Activated CD4-positive, alpha-beta T cell treated with anti-CD3 and anti-CD28 coated beads for 36 hours (primary cell): ENCODE measurements at regions of chr9 and their contacts with region 1.

Region 1: DNA sequence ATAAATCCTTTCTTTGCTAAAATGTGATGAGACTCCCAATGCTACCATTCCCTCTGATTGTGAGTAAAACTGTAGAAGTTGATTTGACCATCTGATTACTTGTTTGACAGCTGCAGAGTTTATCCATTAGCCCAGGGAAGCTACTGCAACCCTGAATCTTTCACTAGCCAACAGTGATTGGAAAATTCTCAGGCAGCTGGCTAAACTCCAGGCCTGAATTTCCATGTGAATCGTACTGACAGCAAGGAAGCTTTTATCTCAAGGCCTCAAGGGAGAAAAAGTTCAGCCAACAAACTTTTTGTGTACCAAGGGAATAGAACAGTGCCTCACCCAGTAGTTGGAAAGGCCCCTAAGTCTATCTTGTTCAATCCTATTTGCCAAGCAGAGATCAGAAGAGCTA is 246.7 kb upstream of the TRPM3 start:
- DNase-seq: no peak
- ATAC-seq: no peak
- H3K4me3 Mint-ChIP-seq: no peak overlapping the region
- H3K27ac Mint-ChIP-seq: no peak overlapping the region
- H3K4me1 Mint-ChIP-seq: no peaks in the 10 kb centered on the region
- H3K27me3 Mint-ChIP-seq: peaks cover 9% of the 10 kb centered on the region

Region 2: DNA sequence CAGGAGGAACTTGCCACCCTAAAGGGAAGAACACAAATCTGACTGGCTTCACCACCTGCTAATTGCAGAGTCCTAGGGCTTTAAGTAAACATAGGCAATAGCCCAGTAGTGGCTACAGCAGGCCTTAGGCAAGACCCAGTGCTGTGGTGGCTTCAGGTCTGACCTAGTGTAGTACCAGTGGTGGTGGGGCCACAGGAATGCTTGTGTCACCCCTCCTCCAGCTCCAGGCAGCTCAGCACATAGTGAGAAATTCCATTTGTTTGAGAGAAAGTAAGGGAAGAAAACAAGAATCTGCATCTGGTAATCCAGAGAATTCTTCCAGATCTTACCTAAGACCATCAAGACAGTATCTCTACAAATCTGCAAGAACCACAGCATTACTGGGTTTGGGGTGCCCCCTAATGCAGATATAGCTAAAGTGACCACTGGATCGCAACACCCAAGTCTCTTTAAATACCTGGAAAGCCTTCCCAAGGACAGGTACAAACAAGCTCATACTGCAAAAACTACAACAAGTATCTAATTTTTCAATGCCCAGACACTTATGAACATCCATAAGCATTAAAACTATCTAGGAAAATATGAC is 144.1 kb before region 1 on chr9:
- CTCF ChIA-PET with region 1: no interaction called
- POLR2A ChIA-PET with region 1: no interaction called
- intact Hi-C with region 1: no loop called
- DNase-seq: no peak
- ATAC-seq: no peak
- H3K4me3 Mint-ChIP-seq: no peak overlapping the region
- H3K27ac Mint-ChIP-seq: no peak overlapping the region
- H3K4me1 Mint-ChIP-seq: no peaks in the 10 kb centered on the region
- H3K27me3 Mint-ChIP-seq: peaks cover 2% of the 10 kb centered on the region

Region 3: DNA sequence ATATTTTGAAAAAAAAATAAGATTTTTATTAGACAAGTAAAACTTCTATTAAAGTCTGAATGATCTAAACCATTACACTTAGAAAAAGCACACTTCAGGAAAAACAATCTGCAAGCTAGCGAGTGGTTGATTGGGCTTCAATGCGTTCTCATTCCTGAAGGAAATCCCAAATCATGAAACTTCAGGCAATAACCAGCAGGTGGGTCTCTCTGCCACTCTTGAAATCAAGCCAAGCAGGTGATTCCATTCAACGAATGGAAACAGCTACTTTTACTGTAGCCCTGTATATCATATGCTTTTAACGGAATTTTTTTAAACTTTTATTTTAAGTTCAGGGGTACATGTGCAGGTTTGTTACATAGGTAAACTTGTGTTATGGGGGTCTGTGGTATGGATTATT is 12.3 kb before region 1 on chr9:
- CTCF ChIA-PET with region 1: no interaction called
- POLR2A ChIA-PET with region 1: no interaction called
- intact Hi-C with region 1: loop called in 1 of 2 experiments (anchors 1 kb)
- DNase-seq: no peak
- ATAC-seq: no peak
- H3K4me3 Mint-ChIP-seq: no peak overlapping the region
- H3K27ac Mint-ChIP-seq: no peak overlapping the region
- H3K4me1 Mint-ChIP-seq: no peaks in the 10 kb centered on the region
- H3K27me3 Mint-ChIP-seq: no peaks in the 10 kb centered on the region

Region 4: GRCh38 chr9:71431931-71432330 is 63.8 kb after region 1 on chr9:
- CTCF ChIA-PET with region 1: no interaction called
- POLR2A ChIA-PET with region 1: no interaction called
- intact Hi-C with region 1: loop called in 1 of 2 experiments (anchors 10 kb)
- DNase-seq: no peak
- ATAC-seq: no peak
- H3K4me3 Mint-ChIP-seq: no peak overlapping the region
- H3K27ac Mint-ChIP-seq: no peak overlapping the region
- H3K4me1 Mint-ChIP-seq: no peaks in the 10 kb centered on the region
- H3K27me3 Mint-ChIP-seq: peaks cover 9% of the 10 kb centered on the region

Region 5: DNA sequence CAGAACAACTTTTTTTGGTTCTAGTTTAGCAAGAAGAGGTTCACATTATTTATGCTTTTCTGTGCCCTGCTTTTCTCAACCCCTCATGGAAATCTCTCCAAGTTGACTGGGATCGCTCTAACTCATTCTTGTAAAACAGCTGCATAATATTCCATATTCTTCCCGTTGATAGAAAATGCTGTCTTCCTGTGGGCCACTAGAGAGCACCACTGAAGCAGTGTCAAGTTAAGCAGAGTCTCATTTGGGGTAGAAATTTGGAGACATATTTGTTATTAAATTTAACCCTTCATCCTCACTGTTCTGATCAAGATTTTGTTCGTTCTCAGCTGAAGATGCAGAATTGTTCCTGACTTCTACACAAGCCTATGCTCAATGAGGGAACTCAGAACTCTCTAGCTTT is 260.1 kb after region 1 on chr9:
- CTCF ChIA-PET with region 1: no interaction called
- POLR2A ChIA-PET with region 1: no interaction called
- intact Hi-C with region 1: no loop called
- DNase-seq: no peak
- ATAC-seq: peak; percentile 49
- H3K4me3 Mint-ChIP-seq: no peak overlapping the region
- H3K27ac Mint-ChIP-seq: no peak overlapping the region
- H3K4me1 Mint-ChIP-seq: no peaks in the 10 kb centered on the region
- H3K27me3 Mint-ChIP-seq: peaks cover 2% of the 10 kb centered on the region

Region 6: GRCh38 chr9:71830929-71831328 is 462.8 kb after region 1 on chr9:
- CTCF ChIA-PET with region 1: no interaction called
- POLR2A ChIA-PET with region 1: no interaction called
- intact Hi-C with region 1: no loop called
- DNase-seq: no peak
- ATAC-seq: no peak
- H3K4me3 Mint-ChIP-seq: no peak overlapping the region
- H3K27ac Mint-ChIP-seq: no peak overlapping the region
- H3K4me1 Mint-ChIP-seq: no peaks in the 10 kb centered on the region
- H3K27me3 Mint-ChIP-seq: no peaks in the 10 kb centered on the region